HEK293 (cell line): ENCODE measurements at regions of chrX and their contacts with region 1.

Region 1: DNA sequence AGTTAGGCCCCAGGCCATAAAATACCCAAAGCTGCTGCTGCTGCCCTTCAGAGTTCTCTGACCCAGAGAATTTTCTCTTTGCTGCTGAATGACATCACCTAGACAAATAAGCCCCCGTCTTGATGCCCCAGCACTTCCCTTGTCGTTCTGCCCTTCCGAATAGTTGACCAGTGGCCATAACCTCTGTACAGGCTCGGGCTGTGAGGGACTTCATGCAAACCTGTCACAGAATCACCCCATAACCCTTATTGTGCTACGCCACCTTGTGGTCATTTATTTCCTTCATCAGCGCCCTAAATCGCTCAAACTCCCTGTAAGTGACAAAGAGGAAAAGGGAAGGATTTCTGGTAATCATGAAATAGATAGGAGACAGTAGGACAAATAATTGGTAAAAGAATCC is 18.8 kb downstream of the SPACA5 start:
- H3K4me3 ChIP-seq: no peak overlapping the region
- H3K27ac ChIP-seq: no peak overlapping the region
- H3K4me1 ChIP-seq: no peaks in the 10 kb centered on the region
- CTCF ChIP-seq: no peak

Region 2: GRCh38 chrX:47836164-47837072 is 189.1 kb before region 1 on chrX and contains the start of gene ZNF81:
- CTCF ChIA-PET with region 1: interaction called, 41 read pairs
- POLR2A ChIA-PET with region 1: interaction called, 3 read pairs
- H3K4me3 ChIP-seq: peak within 1 kb of the TSS; percentile 69
- H3K27ac ChIP-seq: no peak within 1 kb of the TSS
- H3K4me1 ChIP-seq: no peaks in the 10 kb centered on the region
- CTCF ChIP-seq: no peak

Region 3: DNA sequence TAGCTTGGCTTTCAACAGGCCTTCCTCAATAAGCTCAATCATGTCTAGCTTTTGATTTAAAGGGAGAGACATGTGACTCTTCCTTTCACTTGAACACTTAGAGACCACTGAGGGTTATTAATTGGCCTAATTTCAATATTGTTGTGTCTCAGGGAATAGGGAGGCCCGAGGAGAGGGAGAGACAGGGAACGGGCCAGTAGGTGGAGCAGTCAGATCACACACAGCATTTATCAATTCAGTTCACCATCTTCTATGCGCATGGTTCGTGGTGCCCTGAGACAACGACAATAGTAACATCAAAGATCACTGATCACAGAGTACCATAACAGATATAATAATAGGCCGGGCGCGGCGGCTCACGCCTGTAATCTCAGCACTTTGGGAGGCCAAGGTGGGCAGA is 171.1 kb before region 1 on chrX:
- CTCF ChIA-PET with region 1: interaction called, 10 read pairs
- POLR2A ChIA-PET with region 1: no interaction called
- H3K4me3 ChIP-seq: no peak overlapping the region
- H3K27ac ChIP-seq: no peak overlapping the region
- H3K4me1 ChIP-seq: no peaks in the 10 kb centered on the region
- CTCF ChIP-seq: no peak